Panc1 (cell line): ENCODE measurements at regions of chr1 and their contacts with region 1.

Region 1: DNA sequence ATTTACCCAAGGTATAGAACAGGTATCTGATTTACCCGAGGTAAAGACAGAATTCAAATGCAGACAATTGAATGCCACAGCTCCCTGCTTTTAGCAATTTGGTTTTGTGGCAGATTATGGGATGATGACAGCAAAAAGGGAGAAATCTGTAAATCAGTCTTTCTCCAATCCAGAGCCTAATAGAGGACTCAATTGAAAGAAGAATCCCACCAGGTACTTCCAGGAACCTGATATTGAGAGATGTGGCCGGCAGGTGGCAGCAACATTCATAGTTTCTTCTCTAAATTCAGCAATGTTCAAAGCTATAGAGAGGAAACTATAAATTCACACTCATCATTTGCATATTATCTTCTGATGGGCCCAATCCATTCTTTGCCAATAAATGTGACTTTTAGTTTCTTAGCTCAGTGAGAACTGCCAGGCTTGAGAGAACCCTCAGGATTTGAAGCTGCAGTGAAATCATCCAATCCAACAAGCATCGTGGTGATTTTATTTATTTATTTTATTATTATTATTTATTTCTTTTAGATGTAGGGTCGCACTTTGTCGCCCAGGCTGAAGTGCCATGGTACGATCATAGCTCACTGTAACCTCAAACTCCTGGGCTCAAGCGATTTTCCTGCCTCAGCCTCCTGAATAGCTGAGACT is 9.8 kb upstream of the PHACTR4 start:
- DNase-seq: no peak
- ATAC-seq: peak; percentile 81
- H3K4me3 ChIP-seq: no peak overlapping the region
- H3K27ac ChIP-seq: no peak overlapping the region
- H3K4me1 ChIP-seq: no peaks in the 10 kb centered on the region
- H3K27me3 ChIP-seq: no peaks in the 10 kb centered on the region
- CTCF ChIP-seq: peak; percentile 81

Region 2: DNA sequence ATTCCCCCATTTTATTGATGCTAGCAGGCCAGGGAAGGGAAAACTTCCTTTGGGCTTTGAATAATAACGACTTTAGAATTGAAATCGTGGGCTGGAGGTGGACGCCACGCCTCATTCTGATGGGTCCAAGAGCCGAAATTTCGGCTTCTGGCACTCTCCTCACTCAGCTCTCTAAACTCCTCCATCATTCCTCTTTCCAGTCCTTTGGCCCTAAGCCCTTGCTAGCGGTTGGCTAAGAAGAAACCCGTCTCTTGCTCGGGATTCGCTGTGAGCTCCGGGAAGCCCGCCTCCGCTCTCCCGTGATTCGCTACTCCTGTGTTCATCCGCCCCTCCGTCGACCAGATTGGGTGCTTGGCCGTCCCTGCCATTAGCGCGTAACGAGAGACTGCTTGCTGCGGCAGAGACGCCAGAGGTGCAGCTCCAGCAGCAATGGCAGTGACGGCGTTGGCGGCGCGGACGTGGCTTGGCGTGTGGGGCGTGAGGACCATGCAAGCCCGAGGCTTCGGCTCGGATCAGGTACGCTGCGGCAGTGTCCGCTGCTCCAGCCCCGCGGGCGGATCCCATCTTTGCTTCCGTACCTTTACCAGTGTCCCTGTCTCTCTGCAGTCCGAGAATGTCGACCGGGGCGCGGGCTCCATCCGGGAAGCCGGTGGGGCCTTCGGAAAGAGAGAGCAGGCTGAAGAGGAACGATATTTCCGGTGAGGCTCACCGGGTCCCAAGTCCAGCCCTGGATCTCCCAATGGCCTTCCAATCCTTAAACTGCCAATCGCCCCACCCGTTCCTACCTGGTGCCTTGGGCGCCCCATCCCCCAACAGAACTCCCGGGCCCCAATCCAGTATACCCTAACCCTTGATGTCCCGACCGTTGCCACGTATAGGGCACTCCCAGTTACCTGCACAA is 123.7 kb before region 1 on chr1 and contains the start of gene ATP5IF1:
- CTCF ChIA-PET with region 1: no interaction called
- POLR2A ChIA-PET with region 1: interaction called, 10 read pairs
- in situ Hi-C with region 1: no loop called
- intact Hi-C with region 1: no loop called
- DNase-seq: peak; percentile 96
- ATAC-seq: peak; percentile 95
- H3K4me3 ChIP-seq: peak within 1 kb of the TSS; percentile 92 to 94
- H3K27ac ChIP-seq: peak within 1 kb of the TSS; percentile 91
- H3K4me1 ChIP-seq: peaks cover 8% of the 10 kb centered on the region
- H3K27me3 ChIP-seq: no peaks in the 10 kb centered on the region
- CTCF ChIP-seq: no peak
- total RNA-seq, gene ATP5IF1: 94.5 TPM

Region 3: DNA sequence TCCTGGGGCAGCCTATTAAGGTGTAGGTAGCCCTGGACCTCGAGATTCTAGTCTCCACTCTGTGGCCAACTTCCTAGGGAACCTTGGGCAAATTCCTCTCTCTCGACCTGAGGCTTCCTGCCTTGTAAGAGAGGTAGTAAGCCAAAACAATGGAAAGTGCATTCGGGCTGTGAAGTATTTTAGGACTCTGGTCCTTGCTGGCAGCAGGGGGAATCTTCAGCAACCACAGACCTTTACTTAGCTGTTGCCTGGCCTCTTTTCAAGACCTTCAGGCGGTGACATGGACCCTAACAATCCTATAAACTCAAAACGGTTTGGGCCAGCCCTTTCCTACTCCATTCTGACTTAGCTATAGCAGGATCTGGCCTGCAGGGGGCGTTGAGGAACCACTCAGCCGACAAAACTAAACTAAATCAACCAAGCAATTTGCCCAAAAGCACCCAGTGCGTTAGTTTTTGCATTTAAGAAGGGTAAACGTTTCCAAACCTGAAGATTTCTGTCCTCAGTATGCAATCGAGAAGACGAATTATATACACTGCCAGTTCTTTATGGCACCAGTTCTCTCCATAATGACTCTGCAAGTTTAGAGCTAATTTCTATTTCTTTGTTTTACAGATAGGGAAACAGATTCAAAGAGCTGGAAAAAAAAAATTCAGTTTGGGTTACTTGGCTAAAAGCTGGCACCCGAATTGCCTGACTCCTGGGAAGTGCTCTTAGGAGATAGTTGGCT is 111.3 kb before region 1 on chr1:
- CTCF ChIA-PET with region 1: interaction called, 5 read pairs
- POLR2A ChIA-PET with region 1: no interaction called
- in situ Hi-C with region 1: no loop called
- intact Hi-C with region 1: loop called (anchors 2 kb)
- DNase-seq: no peak
- ATAC-seq: peak; percentile 67
- H3K4me3 ChIP-seq: peak overlapping the region; percentile 65 to 81
- H3K27ac ChIP-seq: peak overlapping the region; percentile 77
- H3K4me1 ChIP-seq: peaks cover 29% of the 10 kb centered on the region
- H3K27me3 ChIP-seq: no peaks in the 10 kb centered on the region
- CTCF ChIP-seq: peak; percentile 97

Region 4: GRCh38 chr1:28378906-28379305 is 19.2 kb after region 1 on chr1:
- CTCF ChIA-PET with region 1: no interaction called
- POLR2A ChIA-PET with region 1: interaction called, 11 read pairs
- in situ Hi-C with region 1: no loop called
- intact Hi-C with region 1: no loop called
- DNase-seq: no peak
- ATAC-seq: no peak
- H3K4me3 ChIP-seq: no peak overlapping the region
- H3K27ac ChIP-seq: no peak overlapping the region
- H3K4me1 ChIP-seq: peaks cover 10% of the 10 kb centered on the region; the same call in 1 of the 2 replicates
- H3K27me3 ChIP-seq: no peaks in the 10 kb centered on the region
- CTCF ChIP-seq: no peak

Region 5: GRCh38 chr1:29563571-29563970 is 1203.9 kb after region 1 on chr1:
- CTCF ChIA-PET with region 1: no interaction called
- POLR2A ChIA-PET with region 1: no interaction called
- in situ Hi-C with region 1: no loop called
- intact Hi-C with region 1: no loop called
- DNase-seq: no peak
- ATAC-seq: no peak
- H3K4me3 ChIP-seq: no peak overlapping the region
- H3K27ac ChIP-seq: no peak overlapping the region
- H3K4me1 ChIP-seq: no peaks in the 10 kb centered on the region
- H3K27me3 ChIP-seq: no peaks in the 10 kb centered on the region
- CTCF ChIP-seq: no peak